Dendritic cell treated with granulocyte-macrophage colony-stimulating factor and Interleukin-4, amounts not matched to agents 40 ng/mL and 50 ng/mL, for 4 days (primary cell): ENCODE measurements at regions of chr15 and their contacts with region 1.

Region 1: DNA sequence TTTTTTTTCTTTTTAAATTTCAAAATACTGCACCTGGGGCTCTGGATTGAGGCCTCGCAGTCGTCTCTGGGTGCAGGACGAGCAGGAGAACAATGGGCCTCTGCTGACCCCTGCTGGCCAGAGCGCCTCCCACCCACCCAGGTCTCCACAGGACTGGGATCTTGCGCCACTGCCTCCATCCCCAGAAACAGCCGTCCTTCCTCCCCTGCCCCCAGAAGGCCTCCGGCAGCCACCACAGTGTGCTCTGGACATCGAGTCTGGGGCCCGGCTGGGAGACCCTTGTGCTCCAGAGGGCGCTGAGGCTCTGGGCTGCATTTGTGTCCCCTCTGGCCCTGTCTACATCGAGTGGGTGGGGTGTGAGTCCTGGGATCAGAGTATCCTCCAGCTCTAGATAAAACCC is 6.6 kb upstream of the ACSBG1 start:
- H3K4me3 Mint-ChIP-seq: no peak overlapping the region
- H3K27ac Mint-ChIP-seq: no peak overlapping the region
- H3K4me1 Mint-ChIP-seq: peaks cover 5% of the 10 kb centered on the region
- H3K27me3 Mint-ChIP-seq: peaks cover 1% of the 10 kb centered on the region

Region 2: DNA sequence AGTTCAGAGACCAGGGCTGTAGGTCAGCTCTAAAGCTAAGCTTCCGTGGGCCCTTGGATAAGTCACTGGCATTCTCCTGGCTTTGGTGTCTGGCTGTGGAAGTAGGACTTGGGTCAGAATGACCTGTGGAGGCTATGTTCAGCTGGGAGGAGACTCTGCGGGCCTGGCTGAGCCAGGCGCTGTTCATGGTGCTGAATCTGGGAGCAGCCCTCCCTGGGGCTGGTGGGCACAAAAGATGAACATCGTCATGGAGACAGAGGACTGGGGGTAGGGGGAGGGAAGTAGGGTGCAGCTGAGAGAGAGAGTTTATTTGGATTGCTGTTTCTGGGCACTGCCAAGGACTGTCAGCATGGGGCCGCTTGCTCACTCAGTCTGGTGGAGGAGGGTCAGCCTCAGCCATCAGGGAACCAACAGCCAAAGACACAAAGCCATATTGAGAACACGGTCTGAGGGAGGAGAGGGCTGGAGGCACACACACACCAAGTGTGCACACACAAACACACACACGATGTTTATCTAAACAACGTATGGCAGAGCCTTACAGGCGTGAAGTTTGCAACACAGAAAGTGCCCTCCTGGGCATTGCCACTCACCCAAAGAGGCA is 487.6 kb before region 1 on chr15:
- intact Hi-C with region 1: no loop called
- H3K4me3 Mint-ChIP-seq: no peak overlapping the region
- H3K27ac Mint-ChIP-seq: no peak overlapping the region
- H3K4me1 Mint-ChIP-seq: no peaks in the 10 kb centered on the region
- H3K27me3 Mint-ChIP-seq: no peaks in the 10 kb centered on the region

Region 3: DNA sequence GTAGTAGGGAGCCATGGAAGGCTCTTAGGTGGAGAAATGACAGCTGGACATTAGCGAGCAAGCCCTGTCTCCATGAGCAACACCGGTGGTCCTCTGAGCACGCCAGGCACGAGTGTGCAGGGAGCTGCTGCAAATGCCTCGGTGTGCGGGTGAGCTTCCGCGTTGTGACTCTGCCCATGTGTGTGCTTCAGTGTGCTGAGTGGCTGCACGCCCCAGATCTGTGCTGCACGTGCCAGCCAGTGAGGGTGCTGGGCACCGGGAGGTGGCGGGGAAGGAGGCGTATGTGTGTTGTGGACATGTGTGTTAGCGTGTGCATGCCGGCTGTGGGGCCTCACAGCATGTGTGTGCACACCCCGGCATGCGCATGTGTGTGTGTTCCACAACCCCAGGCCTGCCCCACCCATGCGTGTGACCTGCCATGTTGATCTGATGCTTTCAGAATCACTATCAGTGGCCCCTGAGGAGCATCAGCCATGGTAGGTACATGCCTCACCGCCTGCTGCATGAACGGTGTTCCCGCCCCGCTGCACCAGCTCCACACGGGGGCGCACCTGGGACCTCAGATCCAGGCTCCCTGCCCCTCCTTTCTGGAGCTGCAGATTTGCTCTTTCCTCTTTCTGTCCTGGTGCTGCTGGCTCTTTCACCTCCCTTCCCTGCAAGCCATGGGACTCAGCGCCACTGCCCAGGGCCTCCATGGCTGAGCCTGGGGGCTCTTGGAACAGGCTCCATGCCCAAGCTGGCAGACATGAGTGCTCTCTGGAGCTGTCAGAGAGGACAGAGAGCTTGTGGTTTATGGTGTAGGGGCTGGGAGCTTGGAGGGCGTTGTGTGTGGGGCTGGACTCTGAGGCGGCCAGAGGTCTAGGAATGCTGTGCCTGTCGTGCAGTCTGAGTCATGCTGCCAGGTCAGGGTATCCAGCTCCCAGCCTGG is 332.9 kb before region 1 on chr15:
- intact Hi-C with region 1: loop called (anchors 2 kb)
- H3K4me3 Mint-ChIP-seq: no peak overlapping the region
- H3K27ac Mint-ChIP-seq: no peak overlapping the region
- H3K4me1 Mint-ChIP-seq: peaks cover 14% of the 10 kb centered on the region
- H3K27me3 Mint-ChIP-seq: peaks cover 14% of the 10 kb centered on the region

Region 4: GRCh38 chr15:77959432-77959879 is 281.6 kb before region 1 on chr15:
- intact Hi-C with region 1: loop called (anchors 2 kb)
- H3K4me3 Mint-ChIP-seq: peak overlapping the region; percentile 49
- H3K27ac Mint-ChIP-seq: no peak overlapping the region
- H3K4me1 Mint-ChIP-seq: peaks cover 19% of the 10 kb centered on the region
- H3K27me3 Mint-ChIP-seq: peaks cover 15% of the 10 kb centered on the region

Region 5: DNA sequence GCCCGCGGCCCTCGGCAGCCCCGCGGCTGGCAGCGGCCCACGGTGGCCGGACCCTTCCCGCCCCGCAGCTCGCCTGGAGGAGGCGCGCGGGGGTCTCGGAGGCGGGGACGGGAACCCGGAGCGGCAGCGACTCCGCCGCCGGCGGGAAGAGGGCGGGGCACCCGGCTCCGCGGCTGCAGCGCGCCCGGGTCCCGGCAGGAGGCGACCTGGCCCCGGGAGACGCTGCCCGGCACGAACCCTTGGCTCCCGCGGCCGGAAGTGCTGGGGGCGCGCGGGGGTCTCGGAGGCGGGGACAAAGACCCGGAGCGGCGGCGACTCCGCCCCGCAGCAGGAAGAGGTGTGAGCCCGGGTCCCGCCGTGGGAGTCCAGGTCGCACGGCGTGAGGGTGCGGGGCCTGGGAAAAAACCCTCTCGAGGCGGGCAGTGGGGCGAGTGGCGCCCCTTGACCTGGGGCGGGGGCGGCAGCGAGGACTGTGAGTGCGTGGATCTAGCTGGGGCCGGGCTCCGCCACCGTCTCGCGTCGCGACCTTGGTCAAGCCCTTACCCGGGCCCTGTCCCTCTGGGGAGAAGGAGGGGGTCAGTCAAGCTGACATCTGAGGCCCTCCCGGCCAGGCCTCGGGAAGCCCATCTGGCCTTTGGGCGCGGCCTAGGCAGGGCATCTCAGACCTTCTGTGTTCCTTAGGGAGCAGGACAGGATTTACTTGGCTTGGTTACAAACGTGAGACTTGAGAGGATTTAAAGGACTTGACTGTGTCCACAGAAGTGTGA is 109.5 kb before region 1 on chr15 and contains the start of gene CIB2:
- intact Hi-C with region 1: loop called (anchors 5 kb)
- H3K4me3 Mint-ChIP-seq: peak within 1 kb of the TSS; percentile 79
- H3K27ac Mint-ChIP-seq: peak within 1 kb of the TSS; percentile 82
- H3K4me1 Mint-ChIP-seq: peaks cover 29% of the 10 kb centered on the region
- H3K27me3 Mint-ChIP-seq: peaks cover 13% of the 10 kb centered on the region